Cardiac septum (tissue), 1 donor: ENCODE measurements at regions of chr17 and their contacts with region 1.

Region 1: GRCh38 chr17:64385187-64386083 is 5.2 kb downstream of the PECAM1 start:
- DNase-seq: peak; percentile 87

Region 2: GRCh38 chr17:64331946-64332493 is 53.4 kb before region 1 on chr17:
- intact Hi-C with region 1: loop called (anchors 5 kb)
- DNase-seq: peak; percentile 92

Region 3: DNA sequence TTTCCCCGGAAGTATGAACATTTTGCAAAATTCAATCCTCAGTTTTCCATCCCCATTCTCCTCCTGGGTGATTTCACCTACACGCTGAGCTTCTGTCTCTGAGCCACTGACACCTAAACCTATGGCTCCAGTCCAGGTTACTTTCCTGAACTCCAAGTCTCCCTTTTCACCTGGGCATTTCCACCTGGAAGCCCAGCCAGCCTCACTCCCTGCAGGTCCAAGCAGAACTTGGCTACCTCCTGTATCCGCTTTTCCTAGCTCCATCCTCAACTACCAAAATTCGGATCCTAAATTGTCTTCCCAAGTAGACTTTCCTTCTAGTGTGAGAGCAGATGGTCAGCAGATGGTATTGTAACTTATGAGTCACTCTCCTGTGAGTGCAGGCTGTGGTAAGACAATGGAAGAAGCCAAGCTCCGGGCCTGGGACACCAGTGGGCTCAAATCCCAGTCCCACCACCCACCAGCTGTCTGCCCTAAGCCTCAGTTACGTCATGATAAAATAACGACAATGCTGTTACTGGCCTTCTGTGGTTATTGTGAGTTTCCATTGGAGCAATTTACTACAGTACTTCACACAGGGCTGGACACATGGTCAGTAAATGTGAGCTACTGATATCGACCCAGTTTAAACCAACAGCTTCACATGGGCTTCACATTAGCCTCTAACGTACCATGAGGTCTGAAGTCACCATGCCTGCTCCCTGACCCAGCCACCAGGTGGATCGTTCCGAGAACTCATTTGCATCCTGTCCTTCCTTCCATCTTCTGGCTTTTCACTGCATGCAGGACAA is 28.0 kb before region 1 on chr17:
- intact Hi-C with region 1: no loop called
- DNase-seq: peak; percentile 79

Region 4: DNA sequence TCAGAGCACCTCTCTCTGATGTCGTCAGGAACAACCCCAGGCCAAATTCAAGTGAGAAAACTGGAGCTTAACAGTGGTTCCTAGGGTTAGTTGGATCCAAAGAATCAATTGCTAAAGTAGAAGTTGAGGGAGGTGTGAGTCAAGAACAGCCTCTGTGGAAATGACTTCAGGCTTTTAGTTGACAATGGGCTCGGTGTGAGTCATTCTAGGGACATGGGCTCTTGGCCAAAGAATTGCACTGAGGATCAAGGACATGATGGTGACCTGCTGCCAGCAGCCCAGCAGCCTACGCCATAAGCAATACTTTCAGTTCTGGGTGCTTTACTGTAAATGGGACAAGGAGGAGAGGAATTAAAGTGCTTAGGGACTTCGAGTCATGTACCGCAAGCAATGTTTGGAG is 308.8 kb after region 1 on chr17:
- intact Hi-C with region 1: no loop called
- DNase-seq: peak; percentile 78